AG04450 (cell line): ENCODE measurements at regions of chr16 and their contacts with region 1.

Region 1: DNA sequence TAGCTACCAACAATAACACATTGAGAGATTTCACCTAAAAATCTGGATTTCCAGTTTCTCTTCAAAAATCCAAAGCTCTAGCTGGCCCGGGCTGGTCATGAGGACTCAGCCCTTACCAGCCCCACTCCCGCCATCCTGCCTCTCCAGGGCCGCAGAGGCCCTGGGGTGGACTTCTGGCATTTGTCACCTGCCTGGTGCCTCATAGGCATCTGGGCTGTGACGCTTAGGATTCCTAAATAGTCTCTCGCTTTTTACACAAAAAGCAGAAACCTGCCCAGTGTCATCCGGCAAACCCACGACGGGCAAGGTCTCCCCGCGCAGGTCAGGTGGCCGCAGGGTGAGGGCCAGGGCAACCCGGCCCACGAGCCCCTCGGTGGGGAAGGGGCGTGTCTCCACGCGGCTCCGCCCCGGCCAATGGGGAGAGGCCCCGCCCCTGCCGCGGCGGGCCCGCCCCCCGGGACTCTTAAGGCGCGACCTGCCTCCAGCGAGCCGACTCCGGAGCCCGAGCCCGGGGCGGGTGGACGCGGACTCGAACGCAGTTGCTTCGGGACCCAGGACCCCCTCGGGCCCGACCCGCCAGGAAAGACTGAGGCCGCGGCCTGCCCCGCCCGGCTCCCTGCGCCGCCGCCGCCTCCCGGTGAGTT is at the start of gene VASN:
- DNase-seq: no peak
- H3K4me3 ChIP-seq: peak within 1 kb of the TSS; percentile 97
- H3K27ac ChIP-seq: peak within 1 kb of the TSS; percentile 96
- H3K27me3 ChIP-seq: no peaks in the 10 kb centered on the region
- CTCF ChIP-seq: no peak
- polyA plus RNA-seq, gene VASN: 19.1 and 27.8 TPM in 2 replicates

Region 2: GRCh38 chr16:4271176-4272066 is 100.1 kb before region 1 on chr16:
- CTCF ChIA-PET with region 1: no interaction called
- POLR2A ChIA-PET with region 1: interaction called, 11 read pairs
- DNase-seq: peak; percentile 76
- H3K4me3 ChIP-seq: peak overlapping the region; percentile 84
- H3K27ac ChIP-seq: peak overlapping the region; percentile 70
- H3K27me3 ChIP-seq: no peaks in the 10 kb centered on the region
- CTCF ChIP-seq: no peak

Region 3: DNA sequence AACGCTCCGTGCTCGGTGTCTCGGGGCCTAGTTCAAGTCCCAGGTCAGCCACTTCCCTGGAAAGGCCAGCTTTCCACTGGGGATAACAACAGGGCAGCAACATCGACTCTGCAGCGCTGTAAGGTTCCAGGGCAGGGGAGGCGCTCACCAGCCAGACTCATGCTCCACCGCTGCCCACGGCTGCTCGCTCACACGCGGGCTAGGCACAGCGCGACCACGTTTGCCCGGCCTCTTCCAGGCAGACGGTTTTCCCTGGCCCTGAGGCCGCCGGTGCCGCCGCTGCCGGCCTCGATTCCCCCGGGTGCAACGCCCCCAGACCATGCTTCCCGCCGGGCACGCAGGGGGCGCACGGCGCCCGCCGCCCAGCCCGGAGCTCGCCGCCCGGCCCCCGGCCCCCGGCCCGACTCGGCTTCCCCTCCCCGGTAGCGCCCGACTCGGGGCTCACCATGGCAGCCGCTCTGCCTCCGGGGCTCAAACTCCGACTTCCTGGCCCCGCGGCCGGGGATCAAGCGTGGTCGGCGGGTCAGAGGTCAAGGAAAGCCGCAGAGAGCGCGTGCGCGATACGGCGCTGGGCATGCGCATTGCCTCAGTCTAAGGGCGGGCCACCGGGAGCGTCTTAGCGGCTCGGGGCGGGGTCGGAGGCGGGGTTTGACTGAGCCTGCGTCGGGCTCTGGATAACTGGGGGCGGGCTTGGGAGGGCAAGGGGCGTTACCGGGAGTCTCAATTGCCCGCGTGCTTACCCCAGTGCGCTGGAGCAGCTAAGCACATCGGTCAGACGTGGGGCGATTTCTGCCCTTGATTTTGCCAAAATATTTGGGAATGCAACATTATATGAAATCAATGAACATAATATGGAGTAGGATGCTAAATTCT is 20.5 kb before region 1 on chr16 and contains the start of gene PAM16:
- CTCF ChIA-PET with region 1: no interaction called
- POLR2A ChIA-PET with region 1: interaction called, 10 read pairs
- DNase-seq: peak; percentile 82
- H3K4me3 ChIP-seq: peak within 1 kb of the TSS; percentile 89
- H3K27ac ChIP-seq: peak within 1 kb of the TSS; percentile 52
- H3K27me3 ChIP-seq: no peaks in the 10 kb centered on the region
- CTCF ChIP-seq: peak; percentile 1; the same call in 1 of the 2 replicates
- polyA plus RNA-seq, gene PAM16: 18.4 and 23.8 TPM in 2 replicates

Region 4: DNA sequence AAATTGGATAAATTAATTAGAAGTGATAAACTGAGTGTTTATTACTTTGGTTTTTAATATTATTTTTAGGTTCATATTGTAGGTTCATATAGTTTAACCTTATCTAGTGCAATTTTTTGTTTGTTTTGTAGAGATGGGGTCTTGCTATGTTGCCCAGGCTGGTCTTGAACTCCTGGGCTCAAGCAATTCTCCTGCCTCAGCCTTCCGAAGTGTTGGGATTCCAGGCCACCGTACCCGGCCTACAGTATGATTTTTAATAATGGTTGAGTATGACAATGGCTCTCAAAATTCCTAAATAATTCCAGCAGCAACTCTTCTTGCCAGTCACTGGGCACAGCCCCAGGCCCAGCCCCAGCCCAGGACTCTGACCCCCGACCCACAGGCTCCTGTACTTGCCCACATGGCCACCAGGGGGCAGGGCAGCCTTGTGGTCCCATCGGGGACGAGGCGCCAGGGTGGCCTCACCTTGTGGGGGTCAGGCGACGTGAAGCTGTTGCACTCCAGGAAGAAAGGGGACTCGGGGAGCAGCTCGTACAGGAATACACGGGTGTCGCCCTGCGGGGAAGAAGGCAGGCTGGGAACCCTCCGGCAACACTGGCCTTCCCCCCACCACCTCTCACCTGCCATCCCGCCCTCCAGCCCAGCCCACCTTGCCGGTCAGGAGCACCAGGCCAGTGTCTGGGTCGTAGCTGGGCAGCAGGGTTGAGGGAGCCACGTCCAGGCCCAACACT is 12.5 kb before region 1 on chr16:
- CTCF ChIA-PET with region 1: interaction called, 11 read pairs
- POLR2A ChIA-PET with region 1: interaction called, 10 read pairs
- DNase-seq: no peak
- H3K4me3 ChIP-seq: no peak overlapping the region
- H3K27ac ChIP-seq: no peak overlapping the region
- H3K27me3 ChIP-seq: no peaks in the 10 kb centered on the region
- CTCF ChIP-seq: peak; percentile 86

Region 5: GRCh38 chr16:4384509-4384942 is 13.0 kb after region 1 on chr16:
- CTCF ChIA-PET with region 1: no interaction called
- POLR2A ChIA-PET with region 1: interaction called, 24 read pairs
- DNase-seq: no peak
- H3K4me3 ChIP-seq: no peak overlapping the region
- H3K27ac ChIP-seq: no peak overlapping the region
- H3K27me3 ChIP-seq: no peaks in the 10 kb centered on the region
- CTCF ChIP-seq: no peak

Region 6: DNA sequence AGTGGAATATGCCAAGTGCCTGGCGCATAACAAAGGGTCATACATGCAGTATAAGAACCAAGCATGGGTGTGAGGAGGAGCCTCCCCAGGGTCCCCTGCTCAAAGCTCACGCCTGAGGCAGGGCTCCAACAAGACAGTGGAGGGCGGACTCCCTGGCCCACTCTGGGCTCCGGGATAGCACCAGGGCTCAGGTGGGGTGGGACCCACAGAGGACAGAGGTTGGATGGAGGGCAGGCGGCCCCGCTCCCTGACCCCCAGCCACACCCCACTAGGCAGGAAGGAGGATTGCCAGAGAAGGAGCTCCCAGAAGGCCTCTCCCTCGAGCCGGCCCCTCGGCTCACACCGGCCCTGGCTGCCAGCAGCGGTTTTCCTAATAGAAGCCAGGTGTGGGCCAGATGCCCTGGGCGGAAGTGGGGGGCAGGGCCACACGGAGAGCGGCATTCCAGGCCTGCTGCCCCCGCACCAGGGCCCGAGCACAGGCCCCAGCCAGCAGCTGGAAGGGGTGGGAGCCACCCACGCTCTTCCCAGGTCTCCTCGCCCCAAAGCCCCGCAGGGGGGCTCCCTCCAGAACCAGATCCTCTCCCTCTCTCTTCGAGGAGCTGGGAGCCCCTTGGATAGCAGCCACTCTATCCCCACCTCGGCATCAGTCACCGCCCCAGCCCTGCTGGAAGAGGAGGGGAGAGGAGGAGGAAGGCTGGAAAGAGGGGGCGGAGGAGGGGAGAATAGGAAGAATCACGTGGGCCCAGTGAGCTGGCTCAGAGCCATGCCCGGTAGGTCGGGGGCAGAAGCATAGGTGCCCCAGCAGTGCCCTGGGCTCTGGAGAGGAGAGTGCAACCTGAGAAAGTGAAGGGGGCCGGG is 21.1 kb after region 1 on chr16:
- CTCF ChIA-PET with region 1: no interaction called
- POLR2A ChIA-PET with region 1: interaction called, 34 read pairs
- DNase-seq: peak; percentile 79
- H3K4me3 ChIP-seq: no peak overlapping the region
- H3K27ac ChIP-seq: peak overlapping the region; percentile 87
- H3K27me3 ChIP-seq: no peaks in the 10 kb centered on the region
- CTCF ChIP-seq: no peak

Region 7: GRCh38 chr16:4556112-4556511 is 184.6 kb after region 1 on chr16 and contains the start of gene C16orf96:
- CTCF ChIA-PET with region 1: no interaction called
- POLR2A ChIA-PET with region 1: no interaction called
- DNase-seq: no peak
- H3K4me3 ChIP-seq: no peak within 1 kb of the TSS
- H3K27ac ChIP-seq: no peak within 1 kb of the TSS
- H3K27me3 ChIP-seq: peaks cover 19% of the 10 kb centered on the region
- CTCF ChIP-seq: no peak
- polyA plus RNA-seq, gene C16orf96: not detected in 2 replicates

Region 8: DNA sequence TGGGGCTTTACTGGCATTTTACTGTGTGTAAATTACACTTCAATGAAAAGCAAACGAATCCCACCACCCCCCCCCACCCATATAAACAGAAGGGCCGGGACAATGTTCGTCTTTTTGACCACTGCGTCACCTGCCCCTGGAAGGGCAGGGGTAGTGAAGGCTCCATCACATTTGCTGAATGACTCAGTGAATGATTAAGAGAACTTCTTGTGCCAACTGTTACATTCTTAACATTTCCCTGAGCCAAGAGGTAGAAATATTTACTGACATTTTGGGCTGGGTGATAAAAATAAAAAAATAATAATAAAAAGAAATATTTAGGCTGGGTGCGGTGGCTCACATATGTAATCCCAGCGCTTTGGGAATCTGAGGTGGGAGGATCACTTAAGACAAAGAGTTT is 208.8 kb after region 1 on chr16:
- CTCF ChIA-PET with region 1: no interaction called
- POLR2A ChIA-PET with region 1: no interaction called
- DNase-seq: no peak
- H3K4me3 ChIP-seq: no peak overlapping the region
- H3K27ac ChIP-seq: no peak overlapping the region
- H3K27me3 ChIP-seq: no peaks in the 10 kb centered on the region
- CTCF ChIP-seq: no peak